ENCODE measurements at regions of chr11 and their contacts with region 1.

Region 1: DNA sequence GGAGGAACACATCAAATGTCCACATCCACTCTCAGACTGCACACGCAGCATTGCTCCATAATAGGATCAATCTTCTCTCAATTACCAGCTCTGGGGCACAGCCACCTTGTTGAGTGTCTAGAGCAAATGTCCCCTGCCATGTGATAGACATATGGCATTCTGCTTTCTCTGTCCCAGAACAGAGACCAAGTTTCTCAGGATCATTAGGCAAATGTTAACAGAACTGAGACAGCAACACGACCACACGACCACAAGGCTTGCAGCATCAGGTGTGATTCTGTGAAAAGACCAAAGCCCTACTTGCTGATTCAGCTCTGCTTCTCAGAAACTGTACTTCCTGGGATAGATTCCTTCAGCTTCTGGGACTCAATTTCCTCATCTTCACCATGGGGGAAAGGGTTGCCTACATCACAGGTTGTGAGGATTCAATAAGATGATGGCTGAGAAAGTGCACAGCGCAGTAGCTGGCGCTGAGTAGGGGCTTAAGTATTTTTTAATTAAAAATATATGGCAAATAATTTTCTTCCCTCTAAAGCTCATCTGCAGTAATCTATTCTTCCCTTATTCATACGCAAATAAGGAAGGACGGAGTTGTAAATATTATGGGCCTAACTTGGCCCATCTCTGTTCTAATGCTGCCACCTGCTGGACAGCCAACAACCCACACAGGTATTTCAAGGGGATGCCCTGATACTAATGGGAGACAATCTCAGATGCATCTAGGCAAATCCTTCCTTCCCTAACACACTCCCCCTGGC is 54.3 kb upstream of the USP47 start:
- DNase-seq: peak; percentile 38
- ATAC-seq: peak; percentile 93
- H3K4me3 ChIP-seq: no peak overlapping the region
- H3K27ac ChIP-seq: no peak overlapping the region
- H3K4me1 ChIP-seq: no peaks in the 10 kb centered on the region
- H3K27me3 ChIP-seq: no peaks in the 10 kb centered on the region
- CTCF ChIP-seq: peak; percentile 81 to 91 (median 87)
- POLR2A ChIP-seq: no peak
- RAD21 ChIP-seq: peak; percentile 96

Region 2: DNA sequence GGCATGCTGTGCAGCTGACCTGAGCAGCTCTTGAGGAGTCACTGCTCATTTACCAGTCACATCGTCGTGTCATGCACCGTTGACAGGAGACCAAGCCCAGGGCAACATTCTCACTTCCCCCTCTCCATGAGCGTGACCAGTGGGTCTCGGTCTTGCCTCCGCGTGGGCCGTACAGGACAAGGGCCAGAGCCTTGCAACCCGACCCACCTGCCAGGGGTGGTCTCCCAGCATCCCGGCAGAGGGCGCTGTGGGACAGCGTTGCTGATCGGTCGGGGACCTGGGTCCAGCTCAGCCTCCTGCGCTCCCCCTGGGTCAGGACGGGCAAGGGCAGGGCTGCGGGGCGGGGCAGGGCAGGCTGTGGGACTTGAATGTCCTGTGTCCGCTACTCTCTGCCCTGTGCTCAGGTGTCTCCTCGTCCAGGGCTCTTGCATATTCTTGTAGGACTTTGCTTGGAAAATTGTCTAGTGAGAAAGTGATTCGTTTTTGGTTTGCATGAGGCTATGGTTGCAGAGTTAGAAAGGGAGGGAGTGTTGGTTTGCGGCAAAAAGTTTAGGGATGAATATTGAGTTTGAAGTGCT is 995.0 kb before region 1 on chr11:
- CTCF ChIA-PET with region 1: no interaction called
- POLR2A ChIA-PET with region 1: no interaction called
- RAD21 ChIA-PET with region 1: no interaction called
- intact Hi-C with region 1: loop called (anchors 5 kb)
- DNase-seq: peak; percentile 72
- ATAC-seq: peak; percentile 99
- H3K4me3 ChIP-seq: no peak overlapping the region
- H3K27ac ChIP-seq: no peak overlapping the region
- H3K4me1 ChIP-seq: peaks cover 0 to 8% of the 10 kb centered on the region in 2 experiments; a peak in 3 of 4 replicates
- H3K27me3 ChIP-seq: no peaks in the 10 kb centered on the region
- CTCF ChIP-seq: peak; percentile 91 to 95 (median 95)
- POLR2A ChIP-seq: no peak
- RAD21 ChIP-seq: peak; percentile 99

Region 3: GRCh38 chr11:11036848-11037732 is 750.4 kb before region 1 on chr11:
- CTCF ChIA-PET with region 1: interaction called, 31 read pairs
- POLR2A ChIA-PET with region 1: no interaction called
- RAD21 ChIA-PET with region 1: interaction called in 1 of 2 experiments, 4 read pairs
- intact Hi-C with region 1: loop called (anchors 1 kb)
- DNase-seq: peak; percentile 64
- ATAC-seq: peak; percentile 97
- H3K4me3 ChIP-seq: no peak overlapping the region
- H3K27ac ChIP-seq: no peak overlapping the region
- H3K4me1 ChIP-seq: no peaks in the 10 kb centered on the region
- H3K27me3 ChIP-seq: no peaks in the 10 kb centered on the region
- CTCF ChIP-seq: peak; percentile 76 to 80 (median 78)
- POLR2A ChIP-seq: no peak
- RAD21 ChIP-seq: peak; percentile 84

Region 4: DNA sequence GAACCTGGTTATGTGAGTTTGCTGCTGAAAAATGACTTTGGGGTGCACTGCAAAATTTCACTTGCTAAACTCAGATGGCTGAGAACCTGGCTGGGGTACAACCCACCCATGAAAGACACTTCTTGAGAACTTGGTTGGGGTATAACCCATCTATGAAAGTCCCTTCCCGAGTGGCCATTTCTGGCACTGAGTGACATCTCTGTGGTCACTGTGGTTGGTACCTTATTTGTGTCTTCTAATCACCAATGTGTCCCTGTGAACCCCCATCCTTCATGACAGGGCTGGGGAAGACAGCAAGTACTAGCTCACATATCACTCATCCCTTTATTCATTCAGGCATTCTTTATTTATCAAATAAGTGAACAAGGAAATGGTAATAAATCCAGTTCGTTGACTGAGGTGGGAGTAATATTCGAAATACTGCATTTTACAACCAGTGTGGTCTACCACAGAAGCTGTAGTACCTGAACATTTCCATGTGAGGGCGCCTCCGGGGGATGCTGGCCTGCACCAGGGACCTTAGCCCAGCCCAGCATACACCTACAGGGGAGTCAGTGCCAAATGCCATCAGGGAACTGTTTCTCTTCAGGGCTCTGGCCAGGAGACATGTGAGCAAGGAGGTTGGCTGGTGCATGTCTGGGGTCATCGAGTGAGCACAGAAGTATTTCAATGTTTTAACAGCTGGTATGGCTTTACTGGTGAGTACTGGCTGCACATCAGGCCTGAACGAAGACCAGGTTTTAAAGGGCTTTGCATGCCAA is 556.5 kb before region 1 on chr11:
- CTCF ChIA-PET with region 1: no interaction called
- POLR2A ChIA-PET with region 1: no interaction called
- RAD21 ChIA-PET with region 1: no interaction called
- intact Hi-C with region 1: loop called (anchors 2 kb)
- DNase-seq: peak; percentile 6
- ATAC-seq: peak; percentile 92
- H3K4me3 ChIP-seq: no peak overlapping the region
- H3K27ac ChIP-seq: no peak overlapping the region
- H3K4me1 ChIP-seq: peaks cover 0 to 9% of the 10 kb centered on the region in 2 experiments; a peak in 1 of 4 replicates
- H3K27me3 ChIP-seq: peaks cover 9% of the 10 kb centered on the region; the same call in 1 of the 2 replicates
- CTCF ChIP-seq: peak; percentile 46 to 77 (median 69); a peak in 5 of 6 replicates
- POLR2A ChIP-seq: no peak
- RAD21 ChIP-seq: peak; percentile 57

Region 5: GRCh38 chr11:11332141-11332710 is 455.3 kb before region 1 on chr11:
- CTCF ChIA-PET with region 1: interaction called, 7 read pairs
- POLR2A ChIA-PET with region 1: no interaction called
- RAD21 ChIA-PET with region 1: no interaction called
- intact Hi-C with region 1: loop called (anchors 10 kb)
- DNase-seq: no peak
- ATAC-seq: no peak
- H3K4me3 ChIP-seq: no peak overlapping the region
- H3K27ac ChIP-seq: no peak overlapping the region
- H3K4me1 ChIP-seq: no peaks in the 10 kb centered on the region
- H3K27me3 ChIP-seq: no peaks in the 10 kb centered on the region
- CTCF ChIP-seq: no peak
- POLR2A ChIP-seq: no peak
- RAD21 ChIP-seq: no peak

Region 6: GRCh38 chr11:11621573-11622319 is 165.7 kb before region 1 on chr11 and contains the start of gene GALNT18:
- CTCF ChIA-PET with region 1: interaction called, 18 read pairs
- POLR2A ChIA-PET with region 1: no interaction called
- RAD21 ChIA-PET with region 1: interaction called in 1 of 2 experiments, 3 read pairs
- intact Hi-C with region 1: loop called (anchors 2 kb)
- DNase-seq: peak; percentile 81
- ATAC-seq: peak; percentile 87
- H3K4me3 ChIP-seq: peak within 1 kb of the TSS; percentile 85 to 91
- H3K27ac ChIP-seq: peak within 1 kb of the TSS; percentile 58
- H3K4me1 ChIP-seq: peaks cover 17 to 23% of the 10 kb centered on the region in 2 experiments; a peak in 3 of 4 replicates
- H3K27me3 ChIP-seq: no peaks in the 10 kb centered on the region
- CTCF ChIP-seq: peak; percentile 20 to 42 (median 29); a peak in 3 of 6 replicates
- POLR2A ChIP-seq: peak; percentile 18
- RAD21 ChIP-seq: peak; percentile 25; the same call in 1 of the 2 replicates
- total RNA-seq, gene GALNT18: 19.9 TPM

Region 7: GRCh38 chr11:12361682-12362081 is 574.2 kb after region 1 on chr11:
- CTCF ChIA-PET with region 1: no interaction called
- POLR2A ChIA-PET with region 1: no interaction called
- RAD21 ChIA-PET with region 1: no interaction called
- intact Hi-C with region 1: no loop called
- DNase-seq: no peak
- ATAC-seq: no peak
- H3K4me3 ChIP-seq: no peak overlapping the region
- H3K27ac ChIP-seq: no peak overlapping the region
- H3K4me1 ChIP-seq: peaks cover 9 to 11% of the 10 kb centered on the region in 2 experiments; a peak in 3 of 4 replicates
- H3K27me3 ChIP-seq: no peaks in the 10 kb centered on the region
- CTCF ChIP-seq: no peak
- POLR2A ChIP-seq: no peak
- RAD21 ChIP-seq: no peak